PC-9 (cell line): ENCODE measurements at regions of chr12 and their contacts with region 1.

Region 1: DNA sequence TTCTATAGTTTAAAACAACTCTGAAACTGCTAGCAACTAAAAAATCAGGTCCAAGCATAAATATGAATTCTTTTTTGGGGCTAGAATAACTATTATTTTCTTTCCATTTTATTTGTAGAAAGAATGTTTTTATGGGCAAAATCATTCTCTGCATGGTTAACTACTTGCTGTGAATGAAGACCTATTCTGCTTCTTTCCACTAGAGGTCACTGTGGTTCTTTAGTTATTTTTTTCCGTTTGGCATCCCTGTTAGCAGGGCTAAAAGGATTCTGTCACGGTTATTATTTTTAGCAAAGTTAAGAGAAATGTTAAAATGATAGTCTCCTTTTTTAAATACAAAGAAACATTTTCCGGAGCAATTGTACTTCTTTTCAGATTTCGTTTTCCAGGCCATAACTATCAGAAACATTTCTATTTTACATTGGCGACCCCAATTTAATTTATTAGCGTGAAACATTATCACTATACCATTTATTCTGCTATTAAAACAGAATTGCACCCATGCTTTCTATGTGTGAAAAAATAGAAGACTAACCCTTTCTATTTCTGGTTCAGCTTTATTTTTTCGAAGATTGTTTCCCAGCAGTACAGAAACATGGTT is 404.8 kb downstream of the ATP23 start:
- DNase-seq: no peak
- H3K4me3 ChIP-seq: no peak overlapping the region
- H3K27ac ChIP-seq: no peak overlapping the region
- H3K4me1 ChIP-seq: no peaks in the 10 kb centered on the region
- H3K27me3 ChIP-seq: no peaks in the 10 kb centered on the region
- CTCF ChIP-seq: peak; percentile 84

Region 2: GRCh38 chr12:57983146-57983857 is 362.8 kb before region 1 on chr12:
- CTCF ChIA-PET with region 1: no interaction called
- POLR2A ChIA-PET with region 1: no interaction called
- intact Hi-C with region 1: loop called (anchors 2 kb)
- DNase-seq: peak; percentile 44 to 48
- H3K4me3 ChIP-seq: no peak overlapping the region
- H3K27ac ChIP-seq: no peak overlapping the region
- H3K4me1 ChIP-seq: no peaks in the 10 kb centered on the region
- H3K27me3 ChIP-seq: no peaks in the 10 kb centered on the region
- CTCF ChIP-seq: peak; percentile 90

Region 3: DNA sequence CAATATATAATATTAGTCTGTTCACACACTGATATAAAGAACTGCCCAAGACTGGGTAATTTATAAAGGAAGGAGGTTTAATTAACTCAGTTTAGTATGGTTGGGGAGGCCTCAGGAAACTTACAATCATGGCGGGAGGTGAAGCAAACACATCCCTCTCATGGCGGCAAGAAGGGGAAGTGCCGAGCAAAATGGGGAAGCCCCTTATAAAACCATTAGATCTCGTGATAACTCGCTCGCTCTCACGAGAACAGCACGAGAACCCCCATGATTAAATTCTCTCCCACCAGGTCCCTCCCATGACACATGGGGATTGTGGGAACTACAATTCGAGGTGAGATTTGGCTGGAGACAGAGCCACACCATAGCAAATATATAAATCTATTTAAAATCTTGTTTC is 134.9 kb before region 1 on chr12:
- CTCF ChIA-PET with region 1: no interaction called
- POLR2A ChIA-PET with region 1: no interaction called
- intact Hi-C with region 1: no loop called
- DNase-seq: no peak
- H3K4me3 ChIP-seq: no peak overlapping the region
- H3K27ac ChIP-seq: no peak overlapping the region
- H3K4me1 ChIP-seq: no peaks in the 10 kb centered on the region
- H3K27me3 ChIP-seq: no peaks in the 10 kb centered on the region
- CTCF ChIP-seq: no peak

Region 4: GRCh38 chr12:58364389-58365086 is 18.4 kb after region 1 on chr12:
- CTCF ChIA-PET with region 1: no interaction called
- POLR2A ChIA-PET with region 1: no interaction called
- intact Hi-C with region 1: no loop called
- DNase-seq: peak; percentile 19 to 88
- H3K4me3 ChIP-seq: no peak overlapping the region
- H3K27ac ChIP-seq: 0 out of 2 replicates have a peak overlapping the region, but pooled peaks have one; percentile 11
- H3K4me1 ChIP-seq: peaks cover 18% of the 10 kb centered on the region
- H3K27me3 ChIP-seq: no peaks in the 10 kb centered on the region
- CTCF ChIP-seq: no peak

Region 5: GRCh38 chr12:58425481-58426392 is 79.6 kb after region 1 on chr12:
- CTCF ChIA-PET with region 1: no interaction called
- POLR2A ChIA-PET with region 1: no interaction called
- intact Hi-C with region 1: loop called (anchors 5 kb)
- DNase-seq: peak; percentile 53 to 95
- H3K4me3 ChIP-seq: peak overlapping the region; percentile 37; the same call in 1 of the 2 replicates
- H3K27ac ChIP-seq: peak overlapping the region; percentile 92
- H3K4me1 ChIP-seq: peaks cover 37% of the 10 kb centered on the region
- H3K27me3 ChIP-seq: no peaks in the 10 kb centered on the region
- CTCF ChIP-seq: no peak

Region 6: DNA sequence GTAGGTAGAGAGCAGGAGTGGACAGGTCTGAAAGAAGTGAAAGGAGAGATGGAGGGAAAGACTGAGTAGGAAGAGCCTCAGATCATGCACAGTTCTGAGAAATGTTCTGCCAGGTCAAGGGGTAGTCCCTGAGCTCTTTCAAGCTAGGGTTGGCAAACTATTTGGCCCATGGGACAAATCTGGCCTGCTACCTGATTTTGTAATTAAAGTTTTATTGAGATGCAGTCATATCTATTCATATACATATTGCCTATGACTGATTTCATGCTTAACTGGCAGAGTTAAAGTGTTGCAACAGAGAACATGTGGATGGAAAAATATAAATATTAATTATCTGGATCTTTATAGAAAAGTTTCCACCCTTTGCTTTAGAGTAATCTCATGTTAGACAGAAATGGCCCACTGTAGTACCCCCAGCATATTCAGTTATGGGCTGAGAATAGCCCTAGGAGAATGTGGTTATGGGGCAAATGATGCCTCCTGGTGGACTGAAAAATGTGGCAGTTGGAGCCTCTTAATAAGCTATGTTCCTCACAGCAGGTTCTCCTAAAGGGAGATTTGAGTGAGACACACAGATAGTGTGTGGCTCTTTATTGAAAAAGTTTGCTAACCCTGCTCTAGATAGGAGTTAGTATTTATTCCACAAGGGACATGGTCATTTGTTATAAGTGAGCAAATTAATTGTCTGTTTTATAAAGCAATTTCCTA is 97.3 kb after region 1 on chr12:
- CTCF ChIA-PET with region 1: no interaction called
- POLR2A ChIA-PET with region 1: no interaction called
- intact Hi-C with region 1: loop called (anchors 1 kb)
- DNase-seq: peak in 1 of 2 experiments; percentile 4
- H3K4me3 ChIP-seq: no peak overlapping the region
- H3K27ac ChIP-seq: no peak overlapping the region
- H3K4me1 ChIP-seq: no peaks in the 10 kb centered on the region
- H3K27me3 ChIP-seq: no peaks in the 10 kb centered on the region
- CTCF ChIP-seq: peak; percentile 53

Region 7: GRCh38 chr12:58540480-58541299 is 194.6 kb after region 1 on chr12:
- CTCF ChIA-PET with region 1: interaction called, 3 read pairs
- POLR2A ChIA-PET with region 1: no interaction called
- intact Hi-C with region 1: loop called (anchors 5 kb)
- DNase-seq: peak in 1 of 2 experiments; percentile 46
- H3K4me3 ChIP-seq: no peak overlapping the region
- H3K27ac ChIP-seq: no peak overlapping the region
- H3K4me1 ChIP-seq: no peaks in the 10 kb centered on the region
- H3K27me3 ChIP-seq: no peaks in the 10 kb centered on the region
- CTCF ChIP-seq: peak; percentile 53

Region 8: DNA sequence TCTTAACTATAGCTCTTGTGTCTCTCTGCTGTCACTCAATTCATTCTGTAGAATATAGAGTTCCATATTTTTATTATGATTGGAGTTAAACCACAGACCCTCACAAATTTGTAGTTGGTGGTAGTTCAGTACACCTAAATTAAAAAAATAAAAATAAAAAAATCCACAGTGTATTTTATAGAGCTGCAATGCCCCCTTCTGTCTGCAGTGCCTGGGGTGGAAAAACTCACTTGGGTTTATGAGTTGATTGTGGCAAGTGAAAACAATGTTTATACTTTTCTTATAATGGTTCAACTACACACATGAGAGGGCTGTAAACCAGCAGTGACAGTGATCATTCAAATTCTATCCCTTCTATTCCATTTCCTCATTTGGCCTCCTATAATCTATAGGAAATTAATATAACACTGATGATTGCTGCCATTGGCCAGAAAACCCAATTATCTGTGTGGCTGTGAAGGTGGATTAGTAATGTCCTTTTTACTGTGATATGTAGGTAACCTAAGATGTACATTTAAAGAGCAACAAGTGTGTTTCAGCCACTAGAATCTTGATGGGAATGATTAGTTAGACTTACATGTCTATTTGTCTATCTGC is 741.0 kb after region 1 on chr12:
- CTCF ChIA-PET with region 1: no interaction called
- POLR2A ChIA-PET with region 1: no interaction called
- intact Hi-C with region 1: loop called (anchors 1 kb)
- DNase-seq: no peak
- H3K4me3 ChIP-seq: no peak overlapping the region
- H3K27ac ChIP-seq: no peak overlapping the region
- H3K4me1 ChIP-seq: no peaks in the 10 kb centered on the region
- H3K27me3 ChIP-seq: no peaks in the 10 kb centered on the region
- CTCF ChIP-seq: peak; percentile 74

Region 9: GRCh38 chr12:59149997-59150642 is 804.0 kb after region 1 on chr12:
- CTCF ChIA-PET with region 1: no interaction called
- POLR2A ChIA-PET with region 1: no interaction called
- intact Hi-C with region 1: loop called (anchors 1 kb)
- DNase-seq: peak; percentile 6 to 71
- H3K4me3 ChIP-seq: no peak overlapping the region
- H3K27ac ChIP-seq: no peak overlapping the region
- H3K4me1 ChIP-seq: no peaks in the 10 kb centered on the region
- H3K27me3 ChIP-seq: no peaks in the 10 kb centered on the region
- CTCF ChIP-seq: peak; percentile 93